ENCODE measurements at regions of chr1 and their contacts with region 1.

Region 1: DNA sequence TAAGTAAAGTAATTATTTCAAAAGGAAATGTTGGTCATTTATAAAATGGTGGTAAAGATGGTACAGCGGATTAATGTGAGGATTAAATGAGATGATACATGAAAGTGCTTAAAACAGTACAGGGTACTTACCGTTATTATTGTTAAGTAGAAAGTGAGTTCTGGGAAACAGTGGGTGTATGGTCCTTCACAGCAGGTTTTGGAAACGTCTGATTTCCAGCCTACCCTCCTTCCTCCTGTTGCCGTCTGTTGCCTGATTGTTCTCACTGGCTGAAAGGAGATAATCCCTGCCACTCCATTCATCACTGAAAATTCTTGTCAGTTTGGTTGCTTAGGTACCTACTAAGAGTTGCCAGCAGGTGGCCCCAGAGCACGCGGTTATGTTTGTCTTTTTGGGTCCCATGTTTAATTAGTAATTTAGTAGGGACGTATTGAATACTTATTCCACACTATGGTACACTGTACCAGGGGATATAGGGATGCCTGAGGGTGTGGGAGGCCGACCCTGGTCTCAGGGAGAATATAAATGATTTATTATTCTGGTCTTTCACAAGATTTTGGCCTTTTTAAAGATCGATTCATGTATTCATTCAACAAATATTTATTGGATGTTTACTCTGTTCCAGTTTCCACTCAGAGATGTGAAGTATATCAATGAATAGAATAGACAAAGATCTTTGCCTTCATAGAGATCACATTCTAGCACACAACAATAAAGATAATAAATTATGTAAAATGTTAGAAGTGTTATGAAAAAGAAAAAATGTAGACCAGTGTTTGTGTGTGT is 30.8 kb upstream of the RPTN start:
- DNase-seq: no peak
- H3K4me3 ChIP-seq: no peak overlapping the region
- H3K27me3 ChIP-seq: no peaks in the 10 kb centered on the region; the same call in 1 of the 2 replicates
- CTCF ChIP-seq: peak; percentile 80

Region 2: DNA sequence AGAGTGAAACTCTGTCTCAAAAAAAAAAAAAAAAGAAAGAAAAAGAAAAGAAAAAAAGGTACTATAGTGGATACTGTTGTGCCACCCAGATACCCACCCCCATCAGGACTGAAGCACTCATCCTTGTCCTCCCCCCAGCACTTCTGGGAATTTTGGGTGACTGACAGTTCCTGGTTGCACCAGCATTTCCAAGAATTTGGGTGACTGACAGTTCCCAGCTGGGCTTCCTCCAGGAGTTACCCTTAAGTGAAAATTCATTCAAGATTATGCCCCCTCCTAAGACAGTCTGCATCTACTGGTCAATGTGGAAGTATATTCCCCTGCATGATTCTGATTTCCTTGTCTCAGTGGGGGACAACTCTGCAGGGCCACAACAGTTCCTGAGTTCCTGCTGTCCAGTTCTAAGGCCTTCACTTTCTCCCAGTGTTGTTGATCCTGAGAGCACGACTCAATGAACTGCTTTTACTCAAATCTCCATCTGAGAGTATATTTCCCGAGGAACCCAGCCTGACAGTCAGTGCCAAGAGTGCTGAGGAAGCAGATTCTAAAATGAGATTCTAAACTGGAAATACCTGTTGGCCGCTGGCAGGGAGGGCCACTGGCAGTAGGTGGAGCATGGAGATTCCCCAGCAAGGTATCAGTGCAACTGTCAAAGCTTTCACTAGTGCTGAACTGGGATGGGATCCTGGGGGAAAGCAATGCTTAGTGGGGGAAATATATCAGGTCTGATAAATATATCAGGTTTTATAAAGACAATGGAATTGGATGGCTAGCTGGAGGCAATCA is 450.1 kb before region 1 on chr1:
- CTCF ChIA-PET with region 1: no interaction called
- POLR2A ChIA-PET with region 1: no interaction called
- DNase-seq: no peak
- H3K4me3 ChIP-seq: no peak overlapping the region
- H3K27me3 ChIP-seq: peaks cover 4% of the 10 kb centered on the region
- CTCF ChIP-seq: no peak

Region 3: GRCh38 chr1:152141974-152142584 is 47.8 kb before region 1 on chr1:
- CTCF ChIA-PET with region 1: interaction called, 276 read pairs
- POLR2A ChIA-PET with region 1: no interaction called
- DNase-seq: no peak
- H3K4me3 ChIP-seq: no peak overlapping the region
- H3K27me3 ChIP-seq: peaks cover 5% of the 10 kb centered on the region; the same call in 1 of the 2 replicates
- CTCF ChIP-seq: peak; percentile 86

Region 4: DNA sequence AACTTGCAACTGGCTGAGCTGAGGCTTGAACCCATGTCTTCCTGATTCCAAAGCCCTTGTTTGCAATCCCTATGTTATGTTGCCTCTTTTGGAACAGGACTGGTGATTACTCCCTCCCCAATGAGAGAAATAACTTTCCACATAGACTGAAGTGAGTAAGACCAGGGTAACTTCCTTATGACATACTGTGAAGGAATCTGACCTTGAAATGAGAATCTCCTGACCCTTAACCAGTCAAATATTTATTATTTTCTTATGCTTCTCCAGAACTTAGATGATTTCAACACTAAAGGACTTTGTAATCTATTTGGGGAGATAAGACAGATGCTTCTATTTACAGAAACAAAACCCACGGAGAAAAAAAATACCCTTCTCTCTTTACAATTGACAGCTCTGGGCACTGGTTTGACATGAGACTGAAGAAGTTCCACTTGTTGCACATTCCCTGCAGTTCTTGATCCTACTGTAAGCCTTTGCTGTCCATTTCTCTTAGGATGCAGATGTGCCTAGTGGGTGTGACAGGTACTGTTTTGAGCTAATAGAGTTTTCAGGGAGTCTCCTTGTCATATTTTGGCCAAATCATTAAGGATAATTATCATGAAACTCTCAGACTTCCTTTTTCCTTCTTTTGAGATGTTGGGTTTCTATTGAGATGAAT is 26.9 kb before region 1 on chr1:
- CTCF ChIA-PET with region 1: interaction called, 168 read pairs
- POLR2A ChIA-PET with region 1: interaction called, 3 read pairs
- DNase-seq: peak; percentile 91
- H3K4me3 ChIP-seq: no peak overlapping the region
- H3K27me3 ChIP-seq: no peaks in the 10 kb centered on the region
- CTCF ChIP-seq: no peak

Region 5: DNA sequence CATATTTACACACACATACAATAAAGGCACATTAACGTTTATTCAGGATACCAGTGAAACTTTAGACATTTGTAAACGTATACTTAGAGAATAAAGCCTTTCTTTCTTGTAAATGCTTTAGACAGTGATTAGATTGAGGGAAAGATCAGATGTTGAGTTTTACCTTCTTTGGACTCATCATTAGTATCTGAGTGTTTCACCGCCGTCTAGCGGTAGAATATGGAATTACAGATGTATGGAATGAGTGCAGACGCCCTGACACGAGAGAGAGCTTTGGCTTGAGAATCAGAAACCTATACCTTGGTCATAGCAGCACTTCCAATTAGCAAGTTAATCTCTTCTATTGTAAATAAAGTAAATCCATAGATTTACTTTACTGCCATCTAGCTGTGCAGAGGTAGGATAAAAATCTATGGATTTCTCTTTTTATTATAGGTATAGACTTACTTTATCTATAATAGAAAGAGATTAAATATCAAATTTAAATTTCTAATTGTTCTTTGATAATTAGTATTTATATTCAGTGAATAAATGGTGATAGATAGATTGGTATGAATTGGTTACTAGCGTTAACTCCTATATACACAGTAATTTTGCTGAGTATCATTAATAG is 157.4 kb after region 1 on chr1:
- CTCF ChIA-PET with region 1: interaction called, 13 read pairs
- POLR2A ChIA-PET with region 1: no interaction called
- DNase-seq: peak; percentile 17
- H3K4me3 ChIP-seq: no peak overlapping the region
- H3K27me3 ChIP-seq: no peaks in the 10 kb centered on the region
- CTCF ChIP-seq: peak; percentile 86

Measured in BJ (cell line).